MCF 10A (cell line): ENCODE measurements at regions of chr2 and their contacts with region 1.

Region 1: DNA sequence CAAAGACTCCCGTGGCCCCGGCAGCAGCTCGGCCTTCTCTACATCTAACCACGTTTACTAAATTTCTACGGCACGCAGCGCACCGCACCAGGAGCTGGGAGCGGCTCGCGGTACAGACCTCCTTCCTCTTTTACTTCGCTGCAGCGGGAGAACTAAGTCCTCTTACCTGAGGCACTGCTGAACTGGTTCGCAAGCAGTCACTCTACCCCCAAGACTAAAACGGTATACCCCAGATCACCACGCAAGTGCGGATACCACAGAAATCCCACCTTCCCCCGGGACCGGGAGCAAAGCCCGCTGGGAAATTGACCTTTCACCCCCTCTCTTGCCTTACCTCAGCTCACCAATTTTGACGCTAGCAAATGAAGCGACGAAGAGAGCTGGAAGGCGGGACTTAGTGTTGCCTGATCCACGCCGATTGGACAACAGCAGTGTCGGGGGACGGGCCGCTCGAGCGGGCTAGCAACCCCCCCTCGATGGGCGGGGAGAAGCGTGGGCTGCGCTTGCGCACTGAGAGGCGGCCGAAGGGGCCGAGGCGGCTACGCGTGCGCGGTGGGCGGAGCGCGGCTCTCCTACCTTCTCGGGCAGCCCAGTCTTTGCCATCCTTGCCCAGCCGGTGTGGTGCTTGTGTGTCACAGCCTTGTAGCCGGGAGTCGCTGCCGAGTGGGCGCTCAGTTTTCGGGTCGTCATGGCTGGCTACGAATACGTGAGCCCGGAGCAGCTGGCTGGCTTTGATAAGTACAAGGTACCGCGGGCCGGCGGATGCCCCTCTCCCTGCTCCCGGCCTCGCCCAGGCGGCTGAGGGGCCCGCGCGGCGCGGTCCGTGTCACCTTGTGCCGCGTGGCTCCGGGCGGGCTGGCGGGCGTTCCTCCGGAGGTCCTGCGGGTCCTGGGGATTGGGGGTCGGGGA is at the start of gene SELENOI:
- DNase-seq: peak; percentile 99
- H3K4me3 Mint-ChIP-seq: peak within 1 kb of the TSS; percentile 96
- H3K27ac Mint-ChIP-seq: peak within 1 kb of the TSS; percentile 97
- H3K4me1 Mint-ChIP-seq: peaks cover 17% of the 10 kb centered on the region
- H3K27me3 Mint-ChIP-seq: no peaks in the 10 kb centered on the region
- CTCF ChIP-seq: no peak
- total RNA-seq, gene SELENOI: 43.8 and 51.0 TPM in 2 replicates

Region 2: GRCh38 chr2:26114151-26114550 is 231.6 kb before region 1 on chr2:
- CTCF ChIA-PET with region 1: no interaction called
- POLR2A ChIA-PET with region 1: no interaction called
- intact Hi-C with region 1: no loop called
- DNase-seq: no peak
- H3K4me3 Mint-ChIP-seq: no peak overlapping the region
- H3K27ac Mint-ChIP-seq: no peak overlapping the region
- H3K4me1 Mint-ChIP-seq: no peaks in the 10 kb centered on the region
- H3K27me3 Mint-ChIP-seq: no peaks in the 10 kb centered on the region
- CTCF ChIP-seq: no peak

Region 3: DNA sequence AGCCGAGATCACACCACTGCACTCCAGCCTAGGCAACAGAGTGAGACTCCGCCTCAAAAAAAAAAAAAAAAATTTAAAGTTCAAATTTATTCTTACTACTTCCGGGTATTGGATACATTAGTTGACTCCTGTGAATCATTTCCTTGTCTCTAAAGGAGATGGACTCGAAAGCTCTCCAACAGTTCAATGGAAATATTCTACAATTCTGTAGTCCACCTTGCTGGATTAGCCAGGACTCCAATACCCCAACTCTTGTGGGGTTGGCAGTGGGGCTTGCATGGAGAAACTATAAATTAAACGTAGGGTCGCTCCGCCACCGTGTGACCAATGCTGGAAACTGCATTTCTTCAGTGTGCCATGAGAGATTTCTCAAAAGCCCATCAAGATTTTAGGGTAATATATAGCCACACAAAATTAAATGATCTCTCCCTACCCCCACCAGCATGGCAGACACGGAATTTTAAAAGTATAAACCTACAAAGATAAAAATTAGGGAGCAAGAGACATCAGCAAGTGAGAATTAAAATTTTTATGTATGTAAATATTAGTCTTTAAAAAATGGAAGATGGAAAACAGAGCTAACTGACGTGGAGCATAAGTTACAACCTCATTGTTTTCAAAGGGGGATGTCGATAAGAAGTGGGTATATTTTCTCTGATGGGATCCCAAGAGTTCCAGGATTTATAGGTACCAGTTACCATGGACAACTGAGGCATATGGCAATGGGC is 200.7 kb before region 1 on chr2:
- CTCF ChIA-PET with region 1: no interaction called
- POLR2A ChIA-PET with region 1: no interaction called
- intact Hi-C with region 1: no loop called
- DNase-seq: peak; percentile 74
- H3K4me3 Mint-ChIP-seq: no peak overlapping the region
- H3K27ac Mint-ChIP-seq: peak overlapping the region; percentile 72
- H3K4me1 Mint-ChIP-seq: peaks cover 6% of the 10 kb centered on the region
- H3K27me3 Mint-ChIP-seq: peaks cover 6% of the 10 kb centered on the region
- CTCF ChIP-seq: peak; percentile 84

Region 4: GRCh38 chr2:26274058-26274613 is 71.7 kb before region 1 on chr2:
- CTCF ChIA-PET with region 1: no interaction called
- POLR2A ChIA-PET with region 1: interaction called, 42 read pairs
- intact Hi-C with region 1: no loop called
- DNase-seq: peak; percentile 100
- H3K4me3 Mint-ChIP-seq: peak overlapping the region; percentile 31
- H3K27ac Mint-ChIP-seq: peak overlapping the region; percentile 92
- H3K4me1 Mint-ChIP-seq: peaks cover 35% of the 10 kb centered on the region
- H3K27me3 Mint-ChIP-seq: no peaks in the 10 kb centered on the region
- CTCF ChIP-seq: no peak

Region 5: GRCh38 chr2:26330113-26330549 is 15.7 kb before region 1 on chr2:
- CTCF ChIA-PET with region 1: interaction called, 6 read pairs
- POLR2A ChIA-PET with region 1: interaction called, 26 read pairs
- intact Hi-C with region 1: no loop called
- DNase-seq: peak; percentile 81
- H3K4me3 Mint-ChIP-seq: no peak overlapping the region
- H3K27ac Mint-ChIP-seq: no peak overlapping the region
- H3K4me1 Mint-ChIP-seq: peaks cover 14% of the 10 kb centered on the region
- H3K27me3 Mint-ChIP-seq: peaks cover 9% of the 10 kb centered on the region
- CTCF ChIP-seq: peak; percentile 82

Region 6: DNA sequence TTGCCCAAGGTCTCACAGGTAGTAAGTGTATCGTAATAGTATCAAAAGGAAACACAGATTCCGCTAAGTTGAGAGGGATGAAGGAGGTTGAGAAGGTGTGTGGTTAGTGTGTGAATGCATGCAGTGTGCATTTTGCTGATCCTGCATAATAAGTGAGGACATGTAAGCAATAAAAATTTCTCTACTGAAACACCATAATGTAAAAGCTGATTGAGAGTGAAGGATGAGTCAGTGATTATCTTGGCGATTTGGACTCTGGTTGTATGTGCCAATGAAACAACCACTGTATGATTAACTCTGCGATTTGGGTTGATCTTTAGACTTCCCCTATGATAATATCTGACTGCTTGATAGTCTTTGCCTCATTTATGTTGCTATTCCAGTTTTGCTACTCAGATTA is 17.5 kb after region 1 on chr2:
- CTCF ChIA-PET with region 1: interaction called, 4 read pairs
- POLR2A ChIA-PET with region 1: interaction called, 121 read pairs
- intact Hi-C with region 1: no loop called
- DNase-seq: peak; percentile 50
- H3K4me3 Mint-ChIP-seq: peak overlapping the region; percentile 3
- H3K27ac Mint-ChIP-seq: peak overlapping the region; percentile 9
- H3K4me1 Mint-ChIP-seq: peaks cover 21% of the 10 kb centered on the region
- H3K27me3 Mint-ChIP-seq: no peaks in the 10 kb centered on the region
- CTCF ChIP-seq: no peak

Region 7: DNA sequence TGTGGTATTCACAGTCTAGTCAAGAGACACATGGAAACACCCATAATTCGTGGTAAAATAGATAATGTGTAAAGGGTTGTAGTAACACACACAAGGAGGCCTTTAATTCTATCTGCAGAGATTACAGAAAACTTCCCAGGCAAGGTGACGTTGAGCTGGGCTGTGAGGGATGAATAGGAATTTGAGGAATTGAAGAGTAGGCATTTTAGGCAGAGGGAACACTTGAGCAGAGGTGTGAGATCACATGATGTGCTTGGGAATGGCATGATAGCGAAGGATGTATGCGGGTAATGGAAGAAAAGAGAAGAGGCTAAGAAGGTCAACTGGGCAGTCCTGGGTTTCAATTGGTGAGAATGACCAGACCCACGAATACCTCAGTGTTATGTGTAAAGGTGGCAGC is 76.2 kb after region 1 on chr2:
- CTCF ChIA-PET with region 1: no interaction called
- POLR2A ChIA-PET with region 1: no interaction called
- intact Hi-C with region 1: no loop called
- DNase-seq: no peak
- H3K4me3 Mint-ChIP-seq: no peak overlapping the region
- H3K27ac Mint-ChIP-seq: no peak overlapping the region
- H3K4me1 Mint-ChIP-seq: no peaks in the 10 kb centered on the region
- H3K27me3 Mint-ChIP-seq: peaks cover 9% of the 10 kb centered on the region
- CTCF ChIP-seq: no peak

Region 8: DNA sequence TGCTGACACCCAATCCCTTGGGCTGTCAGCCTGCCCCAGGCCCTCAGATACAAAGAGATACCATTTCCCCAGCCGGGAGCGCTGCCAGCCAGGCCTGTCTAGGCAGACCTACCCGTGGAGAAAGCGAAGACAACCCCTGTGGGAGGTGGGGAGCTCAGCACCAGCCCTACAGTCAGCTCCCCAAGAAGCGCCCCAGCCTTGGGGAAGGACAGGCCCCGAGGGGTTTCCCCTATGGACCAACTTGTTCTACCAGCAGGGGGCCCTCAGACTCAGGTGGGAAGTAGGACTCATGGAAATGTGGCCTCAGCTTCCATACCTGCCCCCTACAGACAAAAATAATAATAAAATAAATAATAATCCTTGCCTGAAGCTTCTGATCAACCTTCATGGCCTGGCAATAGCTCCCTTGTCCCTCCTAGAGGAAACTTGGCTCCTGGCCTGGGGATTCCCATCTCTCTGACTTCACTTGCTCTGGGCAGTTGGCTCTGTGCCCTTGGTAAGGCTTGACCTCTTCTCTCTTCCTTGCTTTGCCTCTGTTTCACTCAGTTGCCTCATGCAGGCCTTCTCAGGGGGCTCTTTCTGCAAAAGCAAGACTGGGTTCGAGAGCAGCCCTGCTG is 425.3 kb after region 1 on chr2:
- CTCF ChIA-PET with region 1: interaction called, 3 read pairs
- POLR2A ChIA-PET with region 1: interaction called, 11 read pairs
- intact Hi-C with region 1: no loop called
- DNase-seq: peak; percentile 98
- H3K4me3 Mint-ChIP-seq: peak overlapping the region; percentile 44
- H3K27ac Mint-ChIP-seq: peak overlapping the region; percentile 72
- H3K4me1 Mint-ChIP-seq: peaks cover 37% of the 10 kb centered on the region
- H3K27me3 Mint-ChIP-seq: no peaks in the 10 kb centered on the region
- CTCF ChIP-seq: peak; percentile 58